ENCODE measurements at regions of chrX and their contacts with region 1.

Region 1: GRCh38 chrX:71283403-71284143 is at the start of gene NONO:
- DNase-seq: peak; percentile 90
- ATAC-seq: peak; percentile 80
- H3K4me3 Mint-ChIP-seq: peak within 1 kb of the TSS; percentile 92
- H3K27ac Mint-ChIP-seq: peak within 1 kb of the TSS; percentile 98
- H3K4me1 Mint-ChIP-seq: peaks cover 9% of the 10 kb centered on the region
- H3K27me3 Mint-ChIP-seq: no peaks in the 10 kb centered on the region
- total RNA-seq, gene NONO: 508 to 1,161 TPM

Region 2: GRCh38 chrX:71068049-71068763 is 215.4 kb before region 1 on chrX and contains the start of gene SNX12:
- CTCF ChIA-PET with region 1: no interaction called
- POLR2A ChIA-PET with region 1: no interaction called
- intact Hi-C with region 1: loop called (anchors 1 to 2 kb)
- DNase-seq: peak; percentile 92
- ATAC-seq: peak; percentile 93
- H3K4me3 Mint-ChIP-seq: peak within 1 kb of the TSS; percentile 91
- H3K27ac Mint-ChIP-seq: peak within 1 kb of the TSS; percentile 93
- H3K4me1 Mint-ChIP-seq: peaks cover 17% of the 10 kb centered on the region
- H3K27me3 Mint-ChIP-seq: no peaks in the 10 kb centered on the region
- total RNA-seq, gene SNX12: 43.2 to 44.6 TPM

Region 3: GRCh38 chrX:71095543-71095911 is 188.0 kb before region 1 on chrX and contains the start of gene FOXO4:
- CTCF ChIA-PET with region 1: interaction called, 3 read pairs
- POLR2A ChIA-PET with region 1: interaction called, 5 read pairs
- intact Hi-C with region 1: loop called (anchors 2 to 5 kb)
- DNase-seq: peak; percentile 92
- ATAC-seq: peak; percentile 93
- H3K4me3 Mint-ChIP-seq: peak within 1 kb of the TSS; percentile 89
- H3K27ac Mint-ChIP-seq: peak within 1 kb of the TSS; percentile 83
- H3K4me1 Mint-ChIP-seq: peaks cover 27% of the 10 kb centered on the region
- H3K27me3 Mint-ChIP-seq: no peaks in the 10 kb centered on the region
- total RNA-seq, gene FOXO4: 9.5 to 10.8 TPM

Region 4: DNA sequence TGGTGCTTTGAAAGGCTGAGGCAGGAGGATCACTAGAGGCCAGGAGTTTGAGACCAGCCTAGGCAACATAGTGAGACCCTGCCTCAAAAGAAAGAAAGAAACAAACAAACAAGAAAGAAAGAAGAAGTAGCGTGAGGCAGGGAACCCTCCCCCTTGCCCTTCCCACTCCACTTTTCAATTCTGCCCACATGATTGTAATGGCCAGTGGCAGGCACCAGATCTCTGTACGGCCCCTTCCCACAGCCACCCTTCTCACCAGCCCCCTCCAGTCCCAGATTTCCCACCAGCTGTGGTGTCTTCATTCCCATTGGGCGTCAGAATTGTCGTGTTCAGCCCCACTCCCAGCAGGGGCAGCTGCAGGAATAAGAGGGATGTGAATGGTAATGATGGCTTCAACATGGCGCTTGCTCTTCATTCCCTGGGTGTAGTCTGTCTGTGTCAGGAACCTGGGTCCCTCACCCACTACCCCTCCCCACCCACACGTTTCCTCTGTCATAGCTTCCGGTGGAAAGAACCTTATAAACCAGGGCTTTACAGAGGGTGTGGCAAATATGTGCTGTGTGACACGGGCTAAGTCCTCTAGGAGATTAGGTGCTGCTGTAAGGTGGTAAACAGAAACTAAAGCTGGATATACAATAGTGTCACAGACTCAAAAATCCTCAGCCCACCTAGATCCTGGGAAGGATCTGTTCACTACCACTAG is 172.3 kb before region 1 on chrX and contains the start of gene IL2RG:
- CTCF ChIA-PET with region 1: no interaction called
- POLR2A ChIA-PET with region 1: interaction called, 4 read pairs
- intact Hi-C with region 1: loop called in 1 of 2 experiments (anchors 1 kb)
- DNase-seq: peak; percentile 83
- ATAC-seq: peak; percentile 83
- H3K4me3 Mint-ChIP-seq: peak within 1 kb of the TSS; percentile 99
- H3K27ac Mint-ChIP-seq: peak within 1 kb of the TSS; percentile 99
- H3K4me1 Mint-ChIP-seq: peaks cover 39% of the 10 kb centered on the region
- H3K27me3 Mint-ChIP-seq: no peaks in the 10 kb centered on the region
- total RNA-seq, gene IL2RG: 278 to 342 TPM

Region 5: DNA sequence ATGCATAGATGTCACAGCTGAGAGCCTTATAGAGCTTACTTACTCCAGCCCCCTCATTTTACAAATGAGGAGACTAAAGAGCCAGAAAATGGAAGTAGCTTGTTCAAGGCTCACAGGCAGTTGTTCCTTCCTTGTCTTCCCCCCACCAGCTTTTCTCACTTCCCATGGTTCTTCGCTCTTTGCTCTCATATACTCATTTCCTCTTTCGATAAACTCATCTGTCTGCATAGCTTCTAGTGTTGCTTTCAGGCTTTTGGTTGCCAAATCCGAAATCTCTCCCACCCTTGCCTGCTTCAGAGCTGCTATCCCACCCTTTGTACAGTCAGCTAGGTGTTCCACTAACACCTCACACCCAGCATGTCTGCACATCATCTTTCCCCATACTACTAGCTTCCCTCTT is 85.5 kb before region 1 on chrX:
- CTCF ChIA-PET with region 1: no interaction called
- POLR2A ChIA-PET with region 1: no interaction called
- intact Hi-C with region 1: loop called in 1 of 2 experiments (anchors 1 kb)
- DNase-seq: no peak
- ATAC-seq: peak; percentile 53
- H3K4me3 Mint-ChIP-seq: peak overlapping the region; percentile 76
- H3K27ac Mint-ChIP-seq: peak overlapping the region; percentile 86
- H3K4me1 Mint-ChIP-seq: peaks cover 17% of the 10 kb centered on the region
- H3K27me3 Mint-ChIP-seq: no peaks in the 10 kb centered on the region

Region 6: GRCh38 chrX:71254092-71254941 is 29.3 kb before region 1 on chrX and contains the start of gene ZMYM3:
- CTCF ChIA-PET with region 1: interaction called, 4 read pairs
- POLR2A ChIA-PET with region 1: interaction called, 8 read pairs
- intact Hi-C with region 1: loop called (anchors 1 kb)
- DNase-seq: peak; percentile 87
- ATAC-seq: peak; percentile 86
- H3K4me3 Mint-ChIP-seq: peak within 1 kb of the TSS; percentile 84
- H3K27ac Mint-ChIP-seq: peak within 1 kb of the TSS; percentile 83
- H3K4me1 Mint-ChIP-seq: peaks cover 29% of the 10 kb centered on the region
- H3K27me3 Mint-ChIP-seq: no peaks in the 10 kb centered on the region
- total RNA-seq, gene ZMYM3: 22.6 to 22.8 TPM

Region 7: DNA sequence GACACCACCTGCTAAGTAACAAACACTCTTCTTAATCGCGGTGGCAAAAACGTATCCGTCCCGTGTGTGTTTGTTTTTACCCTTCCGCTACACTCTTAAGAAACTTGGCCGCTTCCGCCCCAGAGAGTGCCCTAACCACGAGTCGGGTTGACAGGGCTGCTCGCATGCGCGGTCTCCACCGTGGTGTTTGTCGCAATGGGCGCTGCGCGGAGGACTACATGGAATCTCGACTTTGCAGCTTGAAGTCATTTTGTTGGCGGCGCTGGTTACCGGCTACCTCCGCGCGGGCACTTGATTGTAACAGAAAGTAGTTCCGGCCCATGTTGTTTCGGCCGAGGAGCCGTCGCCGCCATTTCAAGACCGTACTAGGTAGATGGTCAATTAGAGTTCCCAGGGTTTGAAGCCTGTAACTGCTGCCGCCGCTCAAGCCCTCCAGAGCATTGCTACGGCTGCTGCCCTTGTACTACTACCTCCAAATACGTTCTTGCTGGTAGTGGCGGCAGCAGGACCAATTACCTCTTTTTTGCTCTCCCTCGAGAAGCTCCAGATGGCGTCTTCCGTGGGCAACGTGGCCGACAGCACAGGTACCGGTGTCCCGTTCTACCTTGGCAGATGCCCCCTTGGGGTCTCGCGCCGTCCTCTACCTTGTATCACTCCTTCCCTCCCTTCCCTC is 249.3 kb after region 1 on chrX and contains the start of gene OGT:
- CTCF ChIA-PET with region 1: no interaction called
- POLR2A ChIA-PET with region 1: interaction called, 11 read pairs
- intact Hi-C with region 1: loop called (anchors 1 to 2 kb)
- DNase-seq: peak; percentile 96
- ATAC-seq: peak; percentile 76
- H3K4me3 Mint-ChIP-seq: peak within 1 kb of the TSS; percentile 96
- H3K27ac Mint-ChIP-seq: peak within 1 kb of the TSS; percentile 98
- H3K4me1 Mint-ChIP-seq: peaks cover 26% of the 10 kb centered on the region
- H3K27me3 Mint-ChIP-seq: no peaks in the 10 kb centered on the region
- total RNA-seq, gene OGT: 331 to 339 TPM

Measured in activated CD4-positive, alpha-beta T cell treated with anti-CD3 and anti-CD28 coated beads for 36 hours (primary cell).